PC-9 (cell line): ENCODE measurements at regions of chr12 and their contacts with region 1.

Region 1: GRCh38 chr12:13094347-13094746 is 9.1 kb downstream of the GSG1 start:
- DNase-seq: peak; percentile 30 to 88
- H3K4me3 ChIP-seq: no peak overlapping the region
- H3K27ac ChIP-seq: peak overlapping the region; percentile 80
- H3K4me1 ChIP-seq: peaks cover 67% of the 10 kb centered on the region
- H3K27me3 ChIP-seq: no peaks in the 10 kb centered on the region
- CTCF ChIP-seq: no peak

Region 2: DNA sequence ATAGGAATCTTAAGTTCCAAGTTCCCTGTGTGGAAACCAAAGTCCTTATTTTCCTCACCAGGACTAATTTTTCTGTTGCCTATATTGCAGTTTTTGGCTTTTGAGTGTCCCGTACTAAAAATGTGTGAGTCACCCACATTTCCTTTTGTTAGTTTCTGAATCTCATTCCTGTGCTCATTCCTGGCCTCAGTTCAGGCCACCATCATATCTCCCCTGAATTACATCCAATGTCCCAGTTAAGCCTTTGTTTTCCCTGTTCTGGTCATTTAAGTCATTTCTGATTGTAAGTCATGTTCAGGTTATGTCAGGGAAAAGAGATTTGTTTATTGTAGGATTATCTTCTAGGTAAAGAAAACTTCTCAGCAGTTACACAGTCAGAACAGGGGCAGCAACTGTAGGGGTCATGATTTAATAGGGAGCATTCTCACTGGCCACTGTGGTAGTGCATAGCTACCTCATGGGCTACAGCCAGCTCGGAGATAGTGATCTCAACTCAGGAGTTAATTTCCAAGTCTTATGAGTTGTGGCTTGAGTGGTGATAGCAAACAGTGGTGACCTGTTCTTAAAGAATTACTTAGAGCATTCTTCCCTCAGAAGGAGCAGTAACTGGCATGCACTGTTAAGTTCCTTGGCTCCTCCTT is 274.6 kb before region 1 on chr12:
- CTCF ChIA-PET with region 1: interaction called, 10 read pairs
- POLR2A ChIA-PET with region 1: no interaction called
- intact Hi-C with region 1: no loop called
- DNase-seq: peak; percentile 86 to 99
- H3K4me3 ChIP-seq: peak overlapping the region; percentile 29
- H3K27ac ChIP-seq: peak overlapping the region; percentile 94
- H3K4me1 ChIP-seq: peaks cover 100% of the 10 kb centered on the region
- H3K27me3 ChIP-seq: no peaks in the 10 kb centered on the region
- CTCF ChIP-seq: no peak

Region 3: GRCh38 chr12:13023811-13024530 is 70.4 kb before region 1 on chr12:
- CTCF ChIA-PET with region 1: interaction called, 5 read pairs
- POLR2A ChIA-PET with region 1: no interaction called
- intact Hi-C with region 1: loop called (anchors 1 kb)
- DNase-seq: peak; percentile 54 to 57
- H3K4me3 ChIP-seq: no peak overlapping the region
- H3K27ac ChIP-seq: no peak overlapping the region
- H3K4me1 ChIP-seq: no peaks in the 10 kb centered on the region
- H3K27me3 ChIP-seq: no peaks in the 10 kb centered on the region
- CTCF ChIP-seq: peak; percentile 69

Region 4: DNA sequence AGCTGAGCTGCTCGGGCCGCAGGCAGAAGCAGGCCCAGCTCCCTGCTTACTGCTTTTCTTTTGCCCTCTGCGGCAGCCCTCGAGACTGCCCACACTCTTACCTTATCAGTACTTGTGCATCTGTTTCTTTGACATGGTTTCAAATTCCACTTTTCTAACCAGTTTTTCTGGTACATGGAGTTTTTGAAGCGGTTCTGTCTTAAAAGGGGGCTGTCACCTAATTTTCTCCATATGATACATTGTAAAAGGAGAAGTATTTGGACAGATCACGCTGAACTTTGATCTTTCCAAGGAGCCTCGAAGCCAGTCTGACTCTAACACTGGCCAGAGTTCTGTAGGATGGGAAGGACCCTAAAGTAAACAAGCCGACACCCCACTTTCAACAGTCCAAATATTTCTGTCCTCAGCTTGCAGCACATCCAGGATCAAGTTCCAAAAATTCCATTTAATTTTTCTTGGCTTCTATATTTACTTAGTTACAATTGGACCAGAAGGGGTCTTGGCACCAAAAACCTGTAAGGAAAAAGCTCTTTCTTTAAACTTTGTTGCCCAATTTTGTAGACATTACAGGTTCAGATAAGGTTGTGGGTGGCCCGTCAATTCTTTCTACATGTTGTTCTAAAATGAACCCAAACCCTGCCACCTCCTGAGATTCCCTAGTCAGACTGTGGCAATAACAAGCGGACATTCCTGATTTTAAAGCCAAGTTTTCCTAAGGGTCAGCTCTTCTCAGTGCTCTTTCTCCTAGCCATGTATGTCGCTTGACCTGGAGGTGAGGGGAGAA is 53.9 kb after region 1 on chr12:
- CTCF ChIA-PET with region 1: no interaction called
- POLR2A ChIA-PET with region 1: no interaction called
- intact Hi-C with region 1: loop called (anchors 1 kb)
- DNase-seq: peak; percentile 68 to 84
- H3K4me3 ChIP-seq: no peak overlapping the region
- H3K27ac ChIP-seq: peak overlapping the region; percentile 43
- H3K4me1 ChIP-seq: peaks cover 38% of the 10 kb centered on the region
- H3K27me3 ChIP-seq: no peaks in the 10 kb centered on the region
- CTCF ChIP-seq: no peak

Region 5: DNA sequence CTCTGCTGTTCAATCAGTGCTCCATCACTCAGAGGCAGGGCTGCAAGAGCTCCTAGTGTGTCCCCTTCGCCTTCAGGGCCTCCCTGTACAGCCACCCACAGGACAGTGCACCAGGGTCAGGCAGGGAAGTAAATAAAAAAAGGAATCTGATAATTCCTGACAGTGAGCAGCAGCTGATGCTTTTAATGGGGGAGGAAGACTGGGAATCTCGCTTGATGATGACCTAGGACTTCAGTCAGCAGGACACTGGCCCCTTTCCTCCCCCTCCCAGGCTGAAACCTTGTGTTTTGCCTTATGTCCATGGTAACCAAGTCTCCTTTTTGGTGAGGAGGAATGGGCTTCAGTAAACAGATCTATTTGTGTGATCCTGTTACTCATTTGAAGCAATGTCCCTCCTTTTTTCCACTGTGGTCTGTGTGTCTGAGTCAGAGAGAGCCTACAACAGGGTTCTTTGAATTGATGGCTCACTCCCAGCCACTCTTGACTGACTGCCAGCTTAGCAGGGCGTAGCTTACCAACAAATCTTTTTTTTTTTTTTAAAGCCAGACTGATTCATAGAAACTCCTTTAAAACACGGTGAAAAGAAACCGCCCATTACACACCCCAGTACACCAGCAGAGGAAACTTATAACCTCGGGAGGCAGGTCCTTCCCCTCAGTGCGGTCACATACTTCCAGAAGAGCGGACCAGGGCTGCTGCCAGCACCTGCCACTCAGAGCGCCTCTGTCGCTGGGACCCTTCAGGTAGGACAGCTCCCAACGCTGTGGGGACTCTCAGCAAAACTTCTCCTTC is 102.0 kb after region 1 on chr12 and contains the start of gene EMP1:
- CTCF ChIA-PET with region 1: no interaction called
- POLR2A ChIA-PET with region 1: interaction called, 42 read pairs
- intact Hi-C with region 1: loop called (anchors 1 kb)
- DNase-seq: peak; percentile 96 to 100
- H3K4me3 ChIP-seq: peak within 1 kb of the TSS; percentile 97
- H3K27ac ChIP-seq: peak within 1 kb of the TSS; percentile 99
- H3K4me1 ChIP-seq: peaks cover 66% of the 10 kb centered on the region
- H3K27me3 ChIP-seq: no peaks in the 10 kb centered on the region
- CTCF ChIP-seq: no peak
- total RNA-seq, gene EMP1: 542 and 909 TPM in 2 replicates

Region 6: DNA sequence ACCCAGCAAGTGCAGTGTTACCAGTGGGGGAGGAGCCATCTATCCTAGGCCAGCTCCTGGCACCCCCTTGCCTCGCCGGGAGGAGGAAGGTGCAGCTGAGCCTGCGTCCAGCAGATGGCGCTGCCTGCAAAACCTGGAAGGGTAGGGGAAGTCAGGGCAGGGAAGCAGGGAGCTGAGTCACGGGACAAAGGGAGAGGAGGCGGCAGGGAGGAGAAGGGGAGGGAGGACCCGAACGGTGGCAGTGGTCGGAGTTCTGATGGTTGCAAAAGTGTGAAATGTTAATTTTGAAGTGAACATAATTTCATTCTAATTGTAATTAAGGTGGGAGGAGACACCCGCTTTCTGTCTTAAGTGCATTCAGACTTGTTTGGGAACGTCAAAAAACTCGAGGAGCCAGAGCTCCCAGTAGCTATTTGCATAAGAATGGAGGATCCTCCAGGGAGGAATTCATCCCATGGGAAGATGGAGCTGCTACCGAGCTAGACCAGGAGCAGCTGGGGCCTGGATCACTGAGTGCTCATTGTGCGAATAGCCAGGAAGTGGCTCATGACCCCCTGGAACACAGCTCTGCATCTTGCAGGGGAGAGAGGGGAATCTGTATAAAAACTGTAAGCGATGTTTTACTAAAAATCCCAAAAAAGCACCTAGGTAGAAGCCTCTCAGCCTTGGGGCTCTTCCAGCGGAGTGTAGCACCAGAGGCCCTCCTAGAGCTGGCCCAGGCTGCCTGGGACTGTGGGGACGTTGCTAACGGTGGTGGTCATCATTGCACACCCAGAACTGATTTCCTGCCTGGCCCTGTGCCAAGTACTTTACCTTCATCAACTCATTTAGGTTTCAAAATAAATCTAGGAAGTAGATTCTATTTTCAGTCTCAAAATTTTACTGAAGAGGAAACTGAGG is 161.7 kb after region 1 on chr12:
- CTCF ChIA-PET with region 1: no interaction called
- POLR2A ChIA-PET with region 1: no interaction called
- intact Hi-C with region 1: loop called (anchors 1 kb)
- DNase-seq: peak; percentile 80 to 99
- H3K4me3 ChIP-seq: peak overlapping the region; percentile 36; the same call in 1 of the 2 replicates
- H3K27ac ChIP-seq: no peak overlapping the region
- H3K4me1 ChIP-seq: peaks cover 14% of the 10 kb centered on the region
- H3K27me3 ChIP-seq: no peaks in the 10 kb centered on the region
- CTCF ChIP-seq: peak; percentile 97